IMR-90 (cell line): ENCODE measurements at regions of chr2 and their contacts with region 1.

Region 1: DNA sequence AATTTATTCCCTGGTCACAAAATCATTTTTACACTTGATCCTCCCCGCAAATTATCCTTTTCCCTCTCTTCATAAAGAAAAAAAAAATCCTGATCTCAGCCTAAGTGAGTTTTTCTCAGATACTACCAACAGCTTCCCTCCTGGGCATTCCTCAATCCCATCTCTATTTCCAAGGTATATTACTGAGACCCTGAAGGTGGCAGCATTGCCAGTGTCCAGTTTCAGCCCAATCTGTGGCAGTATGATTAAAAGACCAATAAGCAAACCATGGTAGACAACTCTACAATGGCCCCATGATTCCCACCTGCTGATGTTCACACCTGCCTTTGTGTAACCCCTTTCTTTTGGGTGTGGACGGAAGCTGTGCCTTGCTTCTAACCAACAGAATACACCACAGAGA is 45.1 kb downstream of the CCDC93 start:
- DNase-seq: no peak
- ATAC-seq: no peak
- H3K4me3 ChIP-seq: no peak overlapping the region
- H3K27ac ChIP-seq: no peak overlapping the region
- H3K4me1 ChIP-seq: peaks cover 2% of the 10 kb centered on the region
- H3K27me3 ChIP-seq: no peaks in the 10 kb centered on the region
- CTCF ChIP-seq: no peak
- POLR2A ChIP-seq: no peak
- RAD21 ChIP-seq: no peak

Region 2: GRCh38 chr2:117936871-117937428 is 31.8 kb before region 1 on chr2:
- CTCF ChIA-PET with region 1: no interaction called
- POLR2A ChIA-PET with region 1: no interaction called
- dilution Hi-C with region 1: no loop called
- in situ Hi-C with region 1: no loop called
- intact Hi-C with region 1: no loop called
- DNase-seq: no peak
- ATAC-seq: no peak
- H3K4me3 ChIP-seq: no peak overlapping the region
- H3K27ac ChIP-seq: no peak overlapping the region
- H3K4me1 ChIP-seq: peaks cover 5% of the 10 kb centered on the region; the same call in 1 of the 2 replicates
- H3K27me3 ChIP-seq: no peaks in the 10 kb centered on the region
- CTCF ChIP-seq: no peak
- POLR2A ChIP-seq: no peak
- RAD21 ChIP-seq: no peak

Region 3: GRCh38 chr2:117994729-117995128 is 26.0 kb after region 1 on chr2:
- CTCF ChIA-PET with region 1: no interaction called
- POLR2A ChIA-PET with region 1: no interaction called
- dilution Hi-C with region 1: no loop called
- in situ Hi-C with region 1: no loop called
- intact Hi-C with region 1: loop called (anchors 1 kb)
- DNase-seq: no peak
- ATAC-seq: no peak
- H3K4me3 ChIP-seq: no peak overlapping the region
- H3K27ac ChIP-seq: no peak overlapping the region
- H3K4me1 ChIP-seq: 0 out of 2 replicates have a peak, but pooled peaks cover 3% of the 10 kb centered on the region
- H3K27me3 ChIP-seq: no peaks in the 10 kb centered on the region
- CTCF ChIP-seq: no peak
- POLR2A ChIP-seq: no peak
- RAD21 ChIP-seq: no peak

Region 4: DNA sequence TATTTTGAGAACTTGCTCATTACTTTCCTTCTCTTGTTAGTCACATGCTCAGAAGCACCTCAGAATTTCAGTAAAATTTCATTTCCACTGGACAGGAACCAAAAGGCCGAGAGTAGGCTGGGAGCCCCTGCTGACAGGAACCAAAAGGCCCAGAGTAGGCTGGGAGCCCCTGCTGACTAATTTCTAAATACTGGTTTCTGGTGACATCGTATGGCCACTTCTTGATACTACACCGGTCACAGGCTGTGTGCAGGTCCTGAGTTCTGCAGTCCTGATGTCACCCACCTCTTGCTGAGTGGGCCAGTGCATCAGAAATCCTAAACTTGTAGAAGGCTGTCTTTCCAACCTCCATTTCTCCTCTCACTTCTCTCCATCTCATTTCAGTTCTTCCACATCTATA is 896.4 kb after region 1 on chr2:
- CTCF ChIA-PET with region 1: no interaction called
- POLR2A ChIA-PET with region 1: no interaction called
- dilution Hi-C with region 1: no loop called
- in situ Hi-C with region 1: no loop called
- intact Hi-C with region 1: no loop called
- DNase-seq: peak; percentile 46
- ATAC-seq: peak; percentile 92
- H3K4me3 ChIP-seq: no peak overlapping the region
- H3K27ac ChIP-seq: no peak overlapping the region
- H3K4me1 ChIP-seq: no peaks in the 10 kb centered on the region
- H3K27me3 ChIP-seq: peaks cover 20% of the 10 kb centered on the region
- CTCF ChIP-seq: peak; percentile 65
- POLR2A ChIP-seq: no peak
- RAD21 ChIP-seq: peak; percentile 70